H1 (cell line): ENCODE measurements at regions of chr1 and their contacts with region 1.

Region 1: DNA sequence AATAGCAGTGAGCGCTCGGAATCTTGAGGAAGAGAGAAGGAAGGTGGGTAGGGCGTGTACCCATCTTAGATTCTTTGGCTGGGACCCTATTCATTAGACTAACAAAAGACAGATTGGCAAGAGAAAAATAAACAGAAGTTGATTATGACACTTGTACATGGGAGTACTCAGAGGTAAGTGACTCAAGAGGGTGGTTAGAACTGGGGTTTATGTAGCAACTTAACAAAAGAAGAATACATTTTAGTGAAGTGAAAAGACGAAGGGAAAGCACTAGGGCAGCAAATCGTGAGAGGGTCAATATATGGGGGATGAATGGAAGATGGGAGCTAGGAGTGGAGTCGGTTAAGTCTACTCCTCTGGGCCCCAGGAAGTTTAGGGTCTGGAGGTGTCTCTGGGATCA is 25.8 kb upstream of the RCC2 start:
- DNase-seq: no peak
- H3K4me3 ChIP-seq: no peak overlapping the region
- H3K27ac ChIP-seq: no peak overlapping the region
- H3K4me1 ChIP-seq: peaks cover 5 to 11% (median 6%) of the 10 kb centered on the region in 4 experiments
- H3K27me3 ChIP-seq: no peaks in the 10 kb centered on the region
- CTCF ChIP-seq: no peak
- EP300 ChIP-seq: no peak
- POLR2A ChIP-seq: no peak
- RAD21 ChIP-seq: no peak

Region 2: DNA sequence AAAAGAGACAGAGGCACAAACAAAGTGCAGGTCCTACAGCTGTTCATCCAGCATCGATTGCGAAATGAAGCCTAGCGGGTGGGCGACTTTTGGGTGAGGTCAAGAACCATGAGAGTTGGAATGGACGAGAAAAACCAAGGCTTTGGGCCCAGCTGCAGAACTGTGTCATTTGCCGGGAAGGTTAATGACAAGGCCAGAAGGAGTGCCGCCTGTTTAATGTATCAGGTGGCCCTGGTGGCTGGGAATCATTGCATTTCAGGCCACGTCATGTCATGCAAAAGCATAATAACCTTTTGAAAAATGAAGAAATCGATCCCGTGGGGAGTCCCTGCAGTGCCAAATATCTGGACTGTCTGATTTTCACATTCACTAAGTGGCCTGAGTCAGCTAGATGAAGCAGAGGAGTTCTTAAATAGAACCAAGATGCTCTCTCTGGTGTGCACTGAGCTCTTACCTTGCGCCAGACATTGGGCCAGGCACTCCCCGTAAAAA is 17.7 kb before region 1 on chr1:
- CTCF ChIA-PET with region 1: interaction called, 20 read pairs
- POLR2A ChIA-PET with region 1: interaction called, 155 read pairs
- DNase-seq: no peak
- H3K4me3 ChIP-seq: no peak overlapping the region
- H3K27ac ChIP-seq: no peak overlapping the region
- H3K4me1 ChIP-seq: peaks cover 0 to 2% (median 0%) of the 10 kb centered on the region in 4 experiments; a peak in 1 of 7 replicates
- H3K27me3 ChIP-seq: no peaks in the 10 kb centered on the region
- CTCF ChIP-seq: no peak
- EP300 ChIP-seq: no peak
- POLR2A ChIP-seq: no peak
- RAD21 ChIP-seq: no peak

Region 3: GRCh38 chr1:17475729-17476128 is 10.5 kb after region 1 on chr1:
- CTCF ChIA-PET with region 1: interaction called, 23 read pairs
- POLR2A ChIA-PET with region 1: interaction called, 4 read pairs
- DNase-seq: no peak
- H3K4me3 ChIP-seq: no peak overlapping the region
- H3K27ac ChIP-seq: no peak overlapping the region
- H3K4me1 ChIP-seq: peaks cover 0 to 7% (median 2%) of the 10 kb centered on the region in 4 experiments; a peak in 4 of 7 replicates
- H3K27me3 ChIP-seq: no peaks in the 10 kb centered on the region
- CTCF ChIP-seq: no peak
- EP300 ChIP-seq: no peak
- POLR2A ChIP-seq: no peak
- RAD21 ChIP-seq: no peak

Region 4: GRCh38 chr1:17485280-17485679 is 20.1 kb after region 1 on chr1:
- CTCF ChIA-PET with region 1: interaction called, 13 read pairs
- POLR2A ChIA-PET with region 1: interaction called, 5 read pairs
- DNase-seq: peak; percentile 36 to 71
- H3K4me3 ChIP-seq: no peak overlapping the region
- H3K27ac ChIP-seq: no peak overlapping the region
- H3K4me1 ChIP-seq: no peaks in the 10 kb centered on the region; a peak in 1 of 7 replicates
- H3K27me3 ChIP-seq: no peaks in the 10 kb centered on the region; a peak in 1 of 7 replicates
- CTCF ChIP-seq: peak; percentile 57 to 74 (median 69)
- EP300 ChIP-seq: no peak
- POLR2A ChIP-seq: no peak
- RAD21 ChIP-seq: peak; percentile 72 to 77

Region 5: GRCh38 chr1:17494114-17494729 is 29.0 kb after region 1 on chr1:
- CTCF ChIA-PET with region 1: interaction called, 16 read pairs
- POLR2A ChIA-PET with region 1: no interaction called
- DNase-seq: peak; percentile 89 to 96
- H3K4me3 ChIP-seq: no peak overlapping the region
- H3K27ac ChIP-seq: no peak overlapping the region
- H3K4me1 ChIP-seq: no peaks in the 10 kb centered on the region
- H3K27me3 ChIP-seq: no peaks in the 10 kb centered on the region
- CTCF ChIP-seq: peak; percentile 98 to 100 (median 99)
- EP300 ChIP-seq: 0 out of 3 replicates have a peak, but pooled peaks of 1 of the 2 experiments have one; percentile 40
- POLR2A ChIP-seq: no peak
- RAD21 ChIP-seq: peak; percentile 100

Region 6: DNA sequence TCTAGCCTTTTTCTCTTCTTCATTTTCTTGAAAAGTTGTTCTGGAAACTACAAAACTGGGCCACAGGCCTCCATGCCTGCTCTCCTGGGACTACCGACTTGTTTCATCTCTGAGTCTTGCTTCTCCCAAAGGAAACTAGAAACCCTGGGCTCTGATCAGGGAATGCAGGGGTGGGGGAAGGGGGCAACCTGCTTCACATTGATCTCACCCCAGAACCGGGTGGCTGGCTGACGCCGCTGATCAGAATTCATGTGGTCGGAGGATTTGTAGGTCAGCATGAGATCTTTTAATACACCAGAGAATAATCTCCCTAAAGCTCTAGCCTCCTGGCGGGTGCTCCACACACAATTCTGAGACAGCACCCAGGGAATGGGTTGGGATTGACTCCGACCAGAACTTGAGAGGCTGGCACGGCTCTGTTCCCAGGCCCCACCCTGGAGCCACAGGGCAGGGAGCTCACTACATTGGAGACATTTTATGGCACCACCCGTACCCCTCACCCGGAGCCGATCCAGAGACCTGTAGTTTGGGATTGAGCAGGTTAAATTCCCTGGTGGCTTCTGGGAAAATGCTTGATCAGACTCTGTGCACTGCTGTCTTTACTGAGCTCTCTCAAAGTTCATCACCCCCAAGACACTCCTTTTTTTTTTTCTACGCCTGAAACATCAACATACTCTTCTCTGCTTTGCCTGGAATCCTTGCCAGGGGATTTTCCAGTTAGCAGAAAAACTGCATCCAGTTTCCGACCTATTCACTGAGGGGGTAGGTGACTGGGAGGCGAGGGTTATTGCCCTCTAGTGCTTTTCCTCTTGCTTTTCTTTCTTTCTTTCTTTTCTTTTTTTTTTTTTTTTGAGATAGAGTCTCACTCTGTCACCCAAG is 62.0 kb after region 1 on chr1:
- CTCF ChIA-PET with region 1: no interaction called
- POLR2A ChIA-PET with region 1: no interaction called
- DNase-seq: no peak
- H3K4me3 ChIP-seq: no peak overlapping the region
- H3K27ac ChIP-seq: no peak overlapping the region
- H3K4me1 ChIP-seq: peaks cover 3 to 15% (median 10%) of the 10 kb centered on the region in 4 experiments; a peak in 5 of 7 replicates
- H3K27me3 ChIP-seq: no peaks in the 10 kb centered on the region
- CTCF ChIP-seq: no peak
- EP300 ChIP-seq: no peak
- POLR2A ChIP-seq: no peak
- RAD21 ChIP-seq: no peak

Region 7: GRCh38 chr1:17551755-17552234 is 86.6 kb after region 1 on chr1:
- CTCF ChIA-PET with region 1: no interaction called
- POLR2A ChIA-PET with region 1: no interaction called
- DNase-seq: no peak
- H3K4me3 ChIP-seq: peak overlapping the region in 2 of 4 experiments; percentile 7 to 44; a peak in 3 of 8 replicates
- H3K27ac ChIP-seq: no peak overlapping the region; the same call in 1 of the 2 replicates
- H3K4me1 ChIP-seq: peaks cover 18 to 50% (median 37%) of the 10 kb centered on the region in 4 experiments
- H3K27me3 ChIP-seq: no peaks in the 10 kb centered on the region
- CTCF ChIP-seq: no peak
- EP300 ChIP-seq: no peak
- POLR2A ChIP-seq: no peak; a peak in 1 of 3 replicates
- RAD21 ChIP-seq: no peak